MCF 10A (cell line): ENCODE measurements at regions of chr11 and their contacts with region 1.

Region 1: GRCh38 chr11:19311308-19312030 is 70.7 kb upstream of the E2F8 start:
- DNase-seq: peak; percentile 71
- H3K4me3 Mint-ChIP-seq: no peak overlapping the region
- H3K27ac Mint-ChIP-seq: no peak overlapping the region
- H3K4me1 Mint-ChIP-seq: peaks cover 5% of the 10 kb centered on the region
- H3K27me3 Mint-ChIP-seq: no peaks in the 10 kb centered on the region
- CTCF ChIP-seq: peak; percentile 59

Region 2: GRCh38 chr11:19160847-19161246 is 150.6 kb before region 1 on chr11:
- CTCF ChIA-PET with region 1: no interaction called
- POLR2A ChIA-PET with region 1: no interaction called
- intact Hi-C with region 1: loop called (anchors 10 kb)
- DNase-seq: peak; percentile 3
- H3K4me3 Mint-ChIP-seq: no peak overlapping the region
- H3K27ac Mint-ChIP-seq: no peak overlapping the region
- H3K4me1 Mint-ChIP-seq: no peaks in the 10 kb centered on the region
- H3K27me3 Mint-ChIP-seq: no peaks in the 10 kb centered on the region
- CTCF ChIP-seq: no peak